ENCODE measurements at regions of chr17 and their contacts with region 1.

Region 1: DNA sequence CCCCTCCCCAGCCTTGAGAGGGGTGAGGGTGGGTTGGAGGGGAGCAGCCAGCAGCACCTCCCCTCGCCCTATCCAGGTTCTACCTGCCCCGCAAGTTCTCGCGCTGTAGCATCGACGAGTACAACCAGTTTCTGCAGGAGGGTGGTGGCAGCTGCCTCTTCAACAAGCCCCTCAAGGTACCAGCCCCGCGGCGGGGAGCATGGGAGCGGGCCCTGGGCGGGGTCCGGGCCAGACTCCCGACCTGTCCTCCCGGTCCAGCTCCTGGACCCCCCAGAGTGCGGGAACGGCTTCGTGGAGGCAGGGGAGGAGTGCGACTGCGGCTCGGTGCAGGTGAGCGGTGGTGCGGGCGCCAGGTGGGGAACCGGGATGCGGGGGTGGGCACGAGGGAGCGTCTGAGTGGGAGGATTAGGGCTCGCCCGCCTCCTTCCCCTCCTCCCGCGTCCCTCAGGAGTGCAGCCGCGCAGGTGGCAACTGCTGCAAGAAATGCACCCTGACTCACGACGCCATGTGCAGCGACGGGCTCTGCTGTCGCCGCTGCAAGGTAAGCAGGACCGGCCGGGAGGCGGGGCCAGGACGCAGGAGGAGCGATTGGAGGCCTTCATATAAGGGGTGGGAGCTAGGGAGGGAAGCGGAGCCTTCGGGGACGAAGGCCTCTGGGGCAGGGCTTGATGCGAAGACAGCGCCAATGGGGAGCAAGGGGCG is 16.5 kb downstream of the ADAM11 start:
- DNase-seq: peak; percentile 100
- ATAC-seq: peak; percentile 92
- H3K4me3 ChIP-seq: peak overlapping the region; percentile 76
- H3K27ac ChIP-seq: no peak overlapping the region
- H3K4me1 ChIP-seq: peaks cover 12% of the 10 kb centered on the region
- H3K27me3 ChIP-seq: no peaks in the 10 kb centered on the region
- CTCF ChIP-seq: peak; percentile 36; the same call in 1 of the 2 replicates

Region 2: DNA sequence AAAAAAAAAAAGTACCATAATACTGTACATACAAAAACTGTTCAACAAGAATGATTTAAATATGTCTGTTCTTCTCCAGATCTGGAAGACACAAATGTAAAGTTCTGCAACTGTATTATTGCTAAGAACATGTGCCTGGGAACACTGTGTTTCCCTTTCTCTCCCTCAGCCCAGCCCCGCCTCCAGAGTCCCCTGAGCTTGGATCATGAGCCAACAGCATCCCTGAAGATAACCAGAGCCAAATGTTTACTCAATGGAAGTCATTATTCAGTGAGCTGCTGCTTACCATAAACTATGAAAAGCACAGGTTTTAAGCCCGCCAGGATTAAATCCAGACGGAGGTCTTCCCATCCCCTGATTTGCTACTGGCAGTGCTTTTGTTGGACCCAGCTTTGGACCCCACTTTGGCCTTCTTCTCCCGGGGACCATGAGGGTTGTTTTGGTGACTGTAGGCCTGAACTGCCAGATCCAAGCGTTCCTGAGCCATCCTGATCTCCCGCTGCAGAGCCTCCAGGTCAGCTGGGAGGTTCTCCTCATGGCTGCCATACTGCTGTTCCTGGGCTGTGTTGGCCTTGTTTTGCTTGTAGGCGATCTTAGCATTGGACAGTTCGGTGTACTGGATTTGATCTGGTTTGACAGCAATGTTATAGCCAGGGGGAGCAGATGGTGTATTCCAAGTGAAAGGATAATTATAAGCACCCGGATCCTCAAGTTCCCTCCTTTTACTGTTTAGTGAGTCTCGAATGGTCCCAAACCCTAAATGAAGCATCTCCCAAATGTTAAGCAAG is 29.2 kb after region 1 on chr17:
- CTCF ChIA-PET with region 1: no interaction called
- POLR2A ChIA-PET with region 1: no interaction called
- intact Hi-C with region 1: no loop called
- DNase-seq: no peak
- ATAC-seq: no peak
- H3K4me3 ChIP-seq: no peak overlapping the region
- H3K27ac ChIP-seq: no peak overlapping the region
- H3K4me1 ChIP-seq: no peaks in the 10 kb centered on the region; the same call in 1 of the 2 replicates
- H3K27me3 ChIP-seq: no peaks in the 10 kb centered on the region
- CTCF ChIP-seq: no peak

Region 3: DNA sequence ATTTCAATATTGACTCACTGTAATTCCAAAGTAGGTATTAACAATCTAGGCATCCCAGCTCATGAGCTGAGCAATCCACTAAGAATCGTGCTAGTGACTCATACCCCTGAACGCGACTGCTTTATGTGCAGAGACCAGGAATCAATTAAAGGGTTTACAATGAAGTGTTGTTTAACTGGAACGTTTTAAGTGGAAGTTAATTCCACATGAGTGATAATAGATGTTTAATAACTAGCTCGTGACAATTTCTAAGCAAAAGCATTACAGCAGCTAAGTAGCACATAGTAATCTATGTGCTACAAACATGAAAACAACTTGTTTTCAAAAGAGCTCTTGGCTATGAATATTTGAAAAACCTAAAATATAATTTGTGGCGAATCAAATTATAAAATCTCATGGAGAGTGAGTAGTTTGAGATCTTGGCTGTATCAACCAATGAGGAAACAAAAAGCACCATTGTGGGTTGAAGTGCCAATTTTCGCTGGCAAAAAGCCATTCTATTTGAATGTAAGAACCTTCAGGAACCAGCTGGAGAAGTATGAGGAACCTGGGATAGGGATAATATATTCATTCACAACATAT is 45.4 kb after region 1 on chr17:
- CTCF ChIA-PET with region 1: interaction called, 8 read pairs
- POLR2A ChIA-PET with region 1: no interaction called
- intact Hi-C with region 1: loop called (anchors 2 kb)
- DNase-seq: peak; percentile 95
- ATAC-seq: peak; percentile 100
- H3K4me3 ChIP-seq: peak overlapping the region; percentile 51
- H3K27ac ChIP-seq: peak overlapping the region; percentile 62
- H3K4me1 ChIP-seq: peaks cover 23% of the 10 kb centered on the region
- H3K27me3 ChIP-seq: no peaks in the 10 kb centered on the region
- CTCF ChIP-seq: no peak

Region 4: DNA sequence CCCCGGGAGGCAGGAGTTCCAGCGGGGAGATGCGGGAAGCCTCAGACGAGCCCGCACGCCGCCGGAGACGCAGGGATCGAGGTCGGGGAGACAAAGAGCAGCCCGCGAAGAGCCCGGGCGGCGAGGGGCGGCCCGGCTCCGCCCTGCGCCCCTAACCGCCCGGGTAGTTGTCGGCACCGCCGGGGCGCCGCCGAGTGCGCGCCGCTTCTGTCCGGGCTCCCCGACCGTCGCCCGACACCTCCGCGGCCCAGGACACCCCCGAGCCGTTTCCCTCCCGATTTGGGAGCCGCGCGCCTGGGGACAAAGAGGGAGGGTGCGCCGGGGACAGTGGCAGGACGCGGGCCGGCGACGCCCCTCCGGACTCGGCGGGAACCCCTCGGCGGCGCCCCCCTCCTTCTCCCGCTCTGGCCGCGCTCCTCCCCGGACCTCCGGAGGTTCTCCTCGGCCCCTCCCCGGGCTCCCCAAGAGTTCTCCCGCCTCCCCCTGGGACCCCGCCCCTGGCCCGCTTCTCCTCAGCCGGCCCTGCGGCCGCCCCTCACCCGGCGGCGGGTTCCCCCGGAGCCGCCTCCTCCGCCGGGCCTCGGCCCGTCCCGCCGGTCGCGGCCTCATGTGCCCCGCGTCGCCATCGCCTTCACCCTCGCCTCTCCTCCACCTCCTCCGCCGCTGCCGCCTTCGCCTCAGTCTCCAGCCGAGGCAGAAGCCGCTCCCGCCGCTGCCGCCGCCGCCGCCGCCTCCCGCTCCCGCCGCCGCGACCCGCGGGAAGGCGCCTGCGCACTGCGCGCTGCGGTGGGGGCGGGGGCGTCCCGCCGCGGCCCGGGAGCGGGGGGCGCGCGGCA is 54.5 kb after region 1 on chr17 and contains the start of gene GJC1:
- CTCF ChIA-PET with region 1: interaction called, 7 read pairs
- POLR2A ChIA-PET with region 1: no interaction called
- intact Hi-C with region 1: loop called (anchors 2 kb)
- DNase-seq: peak; percentile 41
- ATAC-seq: peak; percentile 45
- H3K4me3 ChIP-seq: peak within 1 kb of the TSS; percentile 75
- H3K27ac ChIP-seq: no peak within 1 kb of the TSS
- H3K4me1 ChIP-seq: peaks cover 25% of the 10 kb centered on the region
- H3K27me3 ChIP-seq: no peaks in the 10 kb centered on the region
- CTCF ChIP-seq: no peak
- total RNA-seq, gene GJC1: 16.4 and 17.1 TPM in 2 replicates

Region 5: DNA sequence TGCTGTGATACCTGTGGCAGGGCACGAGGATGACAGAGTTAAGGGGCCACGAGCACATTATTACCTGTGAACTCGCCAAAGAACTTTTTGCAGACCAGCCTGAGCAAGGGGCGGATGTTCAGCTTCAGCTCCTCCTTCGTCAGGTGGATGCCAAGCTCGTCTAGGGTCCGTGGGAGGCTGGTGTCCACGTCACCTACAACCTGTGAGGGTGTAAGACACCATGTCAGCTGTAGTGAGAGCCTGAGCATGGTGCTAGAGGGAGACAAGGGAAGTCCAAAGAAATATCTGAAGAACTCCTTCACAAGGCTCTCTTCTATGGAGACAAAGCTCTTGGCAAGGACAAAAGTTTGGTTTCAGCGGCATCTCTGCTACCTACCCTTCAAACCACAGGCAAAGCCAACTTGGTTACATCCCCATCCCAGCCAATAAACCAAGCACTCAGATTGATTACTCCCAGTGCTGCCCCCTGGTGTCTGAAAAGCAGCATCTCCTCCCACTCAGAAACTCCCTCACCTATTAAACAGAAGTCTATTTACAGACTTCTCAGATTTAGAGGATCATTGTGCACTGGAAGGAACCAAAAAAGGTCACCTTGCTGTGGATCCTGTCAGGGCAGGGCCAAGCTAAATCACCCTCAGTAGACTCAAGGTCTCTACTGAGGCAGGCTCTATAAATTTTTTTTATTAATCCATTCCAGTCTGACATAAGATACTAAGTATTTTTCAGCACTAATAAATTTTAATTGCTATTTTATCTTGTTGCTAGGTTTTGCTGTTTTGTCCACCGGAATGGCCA is 89.8 kb after region 1 on chr17:
- CTCF ChIA-PET with region 1: interaction called, 5 read pairs
- POLR2A ChIA-PET with region 1: no interaction called
- intact Hi-C with region 1: loop called (anchors 1 kb)
- DNase-seq: peak; percentile 93
- ATAC-seq: peak; percentile 88
- H3K4me3 ChIP-seq: no peak overlapping the region
- H3K27ac ChIP-seq: no peak overlapping the region
- H3K4me1 ChIP-seq: no peaks in the 10 kb centered on the region
- H3K27me3 ChIP-seq: no peaks in the 10 kb centered on the region
- CTCF ChIP-seq: peak; percentile 97

Region 6: GRCh38 chr17:44878627-44879221 is 103.4 kb after region 1 on chr17:
- CTCF ChIA-PET with region 1: interaction called, 13 read pairs
- POLR2A ChIA-PET with region 1: no interaction called
- intact Hi-C with region 1: loop called (anchors 1 kb)
- DNase-seq: peak; percentile 65
- ATAC-seq: peak; percentile 62
- H3K4me3 ChIP-seq: no peak overlapping the region
- H3K27ac ChIP-seq: no peak overlapping the region
- H3K4me1 ChIP-seq: no peaks in the 10 kb centered on the region
- H3K27me3 ChIP-seq: no peaks in the 10 kb centered on the region
- CTCF ChIP-seq: peak; percentile 87

Region 7: DNA sequence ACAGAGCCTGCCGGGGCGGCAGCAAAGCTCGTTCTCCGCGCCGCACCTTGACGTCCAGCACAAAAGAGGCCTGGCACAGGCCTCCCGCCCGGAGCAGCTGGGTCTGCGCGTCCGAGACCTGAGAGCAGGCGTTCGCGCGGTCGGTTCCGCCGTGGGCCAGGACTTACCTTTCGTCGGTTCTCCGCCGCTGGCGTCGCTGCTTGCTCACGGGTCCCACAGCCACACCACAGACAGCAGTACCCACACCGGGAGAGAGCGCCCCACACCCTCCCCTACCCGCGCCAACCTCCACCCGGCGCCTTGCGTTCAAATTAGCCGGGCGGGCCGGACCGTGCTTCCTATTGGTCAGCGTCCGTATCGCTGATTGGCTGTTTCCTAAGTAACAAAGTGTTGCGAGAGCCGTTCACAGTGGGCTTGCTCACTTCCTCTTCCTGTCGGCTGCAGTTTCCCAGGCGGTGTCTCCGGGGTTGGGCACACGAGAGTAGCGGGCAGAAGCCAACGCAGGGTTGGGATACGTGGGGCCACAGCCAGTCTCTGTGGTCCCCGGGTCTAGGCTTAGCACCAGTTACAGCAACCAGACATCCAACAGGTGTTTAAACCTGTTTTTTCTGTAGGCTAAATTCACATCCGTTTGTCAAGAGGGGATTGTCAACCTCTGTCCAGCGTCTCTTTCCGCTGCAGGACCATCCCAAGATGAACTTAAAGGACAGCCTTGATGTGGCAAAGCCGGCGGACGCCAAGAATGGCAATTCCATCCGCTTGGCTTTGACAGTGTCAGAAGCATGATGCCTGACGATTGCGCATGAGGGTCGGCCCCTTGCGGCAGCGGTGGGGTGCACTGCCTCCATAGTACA is 172.4 kb after region 1 on chr17 and contains the start of gene KIF18B:
- CTCF ChIA-PET with region 1: no interaction called
- POLR2A ChIA-PET with region 1: no interaction called
- intact Hi-C with region 1: no loop called
- DNase-seq: peak; percentile 99
- ATAC-seq: peak; percentile 97
- H3K4me3 ChIP-seq: peak within 1 kb of the TSS; percentile 87
- H3K27ac ChIP-seq: peak within 1 kb of the TSS; percentile 72
- H3K4me1 ChIP-seq: peaks cover 36% of the 10 kb centered on the region
- H3K27me3 ChIP-seq: no peaks in the 10 kb centered on the region
- CTCF ChIP-seq: peak; percentile 37; the same call in 1 of the 2 replicates
- total RNA-seq, gene KIF18B: 25.0 and 28.5 TPM in 2 replicates

Measured in PC-3 (cell line).